Activated CD4-positive, alpha-beta memory T cell treated with anti-CD3 and anti-CD28 coated beads, Interleukin-2, amount 10 ng/mL, durations not matched to agents 7 days and 5 days (primary cell): ENCODE measurements at regions of chr4 and their contacts with region 1.

Region 1: DNA sequence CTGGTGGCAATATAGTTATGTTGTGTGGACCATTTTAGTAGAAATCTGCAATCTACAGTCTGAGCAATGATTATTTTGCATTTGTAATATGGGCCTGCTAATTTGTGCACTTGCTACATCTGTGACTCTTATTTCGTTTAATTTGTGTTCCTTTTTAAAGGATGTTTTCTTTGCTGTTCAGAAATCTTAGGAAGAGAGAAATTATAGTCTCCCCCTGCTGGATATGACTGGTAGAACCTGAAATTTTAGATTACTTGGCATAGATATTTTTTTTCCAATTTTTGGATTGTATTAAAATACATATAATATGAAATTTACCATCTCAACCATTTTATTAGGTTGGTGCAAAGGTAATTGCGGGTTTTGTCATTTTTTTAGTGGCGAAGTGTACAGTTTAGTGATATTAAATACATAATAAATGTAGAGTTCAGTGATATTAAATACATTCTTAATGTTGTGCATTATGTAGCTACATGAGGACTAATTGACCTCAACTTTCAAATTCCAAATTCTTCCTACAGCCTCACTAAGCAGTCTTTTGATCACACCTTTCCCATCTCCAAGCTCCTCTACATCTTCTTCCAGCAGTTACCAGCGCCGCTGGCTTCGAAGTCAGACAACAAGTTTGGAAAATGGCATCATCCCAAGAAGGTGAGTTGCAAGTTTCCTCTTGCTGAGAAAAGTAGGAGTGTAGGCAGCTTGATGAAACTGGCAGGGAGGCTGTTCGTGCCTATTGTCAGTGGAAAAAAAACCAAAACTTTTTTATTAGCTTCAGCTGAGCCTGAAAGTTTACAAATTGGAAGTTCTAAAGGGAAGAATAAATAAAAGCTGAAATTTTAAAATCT is 82.2 kb downstream of the FNIP2 start:
- DNase-seq: no peak
- H3K4me3 Mint-ChIP-seq: no peak overlapping the region
- H3K27ac Mint-ChIP-seq: no peak overlapping the region
- H3K4me1 Mint-ChIP-seq: peaks cover 16% of the 10 kb centered on the region
- H3K27me3 Mint-ChIP-seq: no peaks in the 10 kb centered on the region

Region 2: GRCh38 chr4:158710814-158711213 is 140.2 kb before region 1 on chr4:
- CTCF ChIA-PET with region 1: interaction called, 13 read pairs
- POLR2A ChIA-PET with region 1: no interaction called
- DNase-seq: no peak
- H3K4me3 Mint-ChIP-seq: no peak overlapping the region
- H3K27ac Mint-ChIP-seq: no peak overlapping the region
- H3K4me1 Mint-ChIP-seq: peaks cover 12% of the 10 kb centered on the region
- H3K27me3 Mint-ChIP-seq: no peaks in the 10 kb centered on the region

Region 3: DNA sequence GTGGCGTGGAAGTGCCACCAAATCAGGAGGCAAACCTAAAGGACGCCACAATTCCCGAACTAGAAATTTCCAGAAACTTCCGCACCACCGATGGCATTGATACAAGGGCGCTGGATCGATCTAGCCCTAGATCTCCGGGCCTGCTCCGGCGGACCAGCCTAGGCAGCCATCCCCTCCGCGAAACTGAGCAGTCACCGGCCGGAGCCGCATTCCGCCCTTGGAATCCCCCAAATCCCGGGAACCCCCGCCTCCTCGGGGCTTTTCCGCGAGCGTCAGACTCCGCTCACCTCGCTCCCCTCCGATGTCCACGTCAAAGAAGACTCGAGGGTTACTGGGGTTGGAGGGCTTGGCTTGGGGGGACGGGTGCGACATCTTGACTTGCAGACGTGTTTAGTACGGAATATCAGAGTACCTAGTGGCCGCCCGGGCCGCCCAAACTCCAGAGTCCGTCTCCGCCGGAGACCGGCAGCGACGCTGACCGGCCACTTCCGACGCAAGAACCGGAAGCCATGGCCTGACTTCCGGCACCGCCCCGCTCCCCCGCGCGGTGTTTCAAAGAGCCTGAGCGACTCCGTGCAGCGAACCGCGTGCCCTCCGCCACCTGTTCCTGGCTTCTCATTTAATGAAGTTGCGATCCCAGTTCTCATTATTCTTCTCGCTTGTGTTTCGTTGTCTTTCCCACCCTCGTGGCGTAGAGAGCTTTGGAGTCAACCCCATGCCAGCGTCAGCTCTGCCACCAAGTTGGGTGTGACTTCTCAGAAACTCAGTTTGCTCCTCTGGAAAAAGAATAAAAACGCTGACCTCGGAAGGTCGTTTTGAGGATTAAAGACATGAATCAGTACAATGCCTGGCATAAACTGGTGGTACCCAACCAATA is 127.9 kb before region 1 on chr4 and contains the start of gene PPID:
- CTCF ChIA-PET with region 1: interaction called, 10 read pairs
- POLR2A ChIA-PET with region 1: no interaction called
- DNase-seq: peak; percentile 88
- H3K4me3 Mint-ChIP-seq: peak within 1 kb of the TSS; percentile 85
- H3K27ac Mint-ChIP-seq: peak within 1 kb of the TSS; percentile 98
- H3K4me1 Mint-ChIP-seq: peaks cover 72% of the 10 kb centered on the region
- H3K27me3 Mint-ChIP-seq: no peaks in the 10 kb centered on the region
- total RNA-seq, gene PPID: 46.2 to 47.5 TPM

Region 4: GRCh38 chr4:158729716-158730559 is 121.1 kb before region 1 on chr4:
- CTCF ChIA-PET with region 1: interaction called, 21 read pairs
- POLR2A ChIA-PET with region 1: no interaction called
- DNase-seq: peak; percentile 63
- H3K4me3 Mint-ChIP-seq: no peak overlapping the region
- H3K27ac Mint-ChIP-seq: no peak overlapping the region
- H3K4me1 Mint-ChIP-seq: peaks cover 40% of the 10 kb centered on the region
- H3K27me3 Mint-ChIP-seq: peaks cover 17% of the 10 kb centered on the region

Region 5: DNA sequence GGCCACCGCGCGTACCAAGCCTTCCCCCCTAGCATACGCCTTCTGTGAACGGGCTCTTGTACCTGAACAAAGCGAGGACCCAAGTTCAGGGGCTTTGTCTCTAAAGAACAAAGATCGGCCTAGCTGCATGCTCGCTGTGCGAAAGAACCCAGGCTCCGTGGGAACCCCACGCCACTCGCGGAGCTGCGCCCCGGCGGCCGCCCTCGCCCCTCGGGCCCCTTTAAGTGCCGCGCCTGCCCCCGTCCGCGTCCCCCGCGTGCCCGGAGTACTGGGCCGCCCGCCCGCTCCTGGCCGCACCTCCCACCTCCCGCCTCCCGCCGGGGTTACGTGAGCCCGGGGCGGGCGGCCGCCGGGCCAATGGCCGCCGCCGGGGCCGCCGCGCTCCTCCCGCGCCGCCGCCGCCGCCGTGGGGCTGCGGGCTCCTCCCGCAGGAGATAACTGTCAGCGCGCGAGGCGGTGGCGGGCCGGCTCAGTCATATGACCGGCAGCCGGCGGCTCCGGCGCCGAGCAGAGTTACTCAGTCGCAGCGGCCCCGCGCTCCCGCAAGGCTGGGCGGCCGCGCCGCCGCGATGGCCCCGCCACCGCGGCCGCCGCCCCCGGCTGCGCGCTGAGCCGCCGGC is 82.4 kb before region 1 on chr4 and contains the start of gene FNIP2:
- CTCF ChIA-PET with region 1: interaction called, 10 read pairs
- POLR2A ChIA-PET with region 1: interaction called, 5 read pairs
- DNase-seq: peak; percentile 71
- H3K4me3 Mint-ChIP-seq: peak within 1 kb of the TSS; percentile 99
- H3K27ac Mint-ChIP-seq: peak within 1 kb of the TSS; percentile 90
- H3K4me1 Mint-ChIP-seq: peaks cover 43% of the 10 kb centered on the region
- H3K27me3 Mint-ChIP-seq: no peaks in the 10 kb centered on the region
- total RNA-seq, gene FNIP2: 16.9 to 17.3 TPM